Calu3 (cell line): ENCODE measurements at regions of chr18 and their contacts with region 1.

Region 1: DNA sequence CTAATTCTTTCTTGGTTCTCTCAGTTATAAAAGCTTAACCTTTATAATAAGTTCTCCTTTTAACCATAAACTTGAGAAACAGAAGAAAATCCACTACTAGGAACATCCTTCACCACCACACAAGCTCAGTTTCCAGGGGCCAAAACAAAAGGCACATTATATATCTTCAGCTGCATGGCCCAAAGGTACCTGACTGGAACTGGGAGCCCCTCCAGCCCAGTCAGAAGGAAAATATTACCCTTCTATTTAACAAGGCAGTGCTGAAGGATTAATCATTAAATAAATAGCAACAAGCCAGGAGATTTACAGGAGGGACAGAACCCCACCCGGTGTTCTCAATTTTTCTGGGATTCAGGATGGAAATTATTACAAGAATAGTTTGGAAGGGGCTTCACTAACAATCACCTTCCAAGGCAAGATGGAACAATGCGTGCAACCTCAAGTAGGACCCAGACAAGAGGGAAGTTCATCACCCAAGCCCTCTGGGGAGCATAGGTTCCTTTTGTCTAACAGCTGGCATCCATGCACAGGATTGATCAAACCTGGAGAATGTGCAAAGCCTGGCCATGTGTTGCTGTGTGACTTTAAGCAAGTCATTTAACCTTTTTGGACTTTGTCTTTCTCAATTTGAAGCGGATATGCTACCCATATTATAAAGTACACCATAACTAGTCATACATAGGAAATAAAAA is 159.6 kb upstream of the SETBP1 start:
- DNase-seq: peak; percentile 6
- H3K4me3 Mint-ChIP-seq: no peak overlapping the region
- H3K27ac Mint-ChIP-seq: no peak overlapping the region
- H3K4me1 Mint-ChIP-seq: peaks cover 18% of the 10 kb centered on the region
- H3K27me3 Mint-ChIP-seq: no peaks in the 10 kb centered on the region
- CTCF ChIP-seq: no peak

Region 2: GRCh38 chr18:44149706-44150105 is 371.4 kb before region 1 on chr18:
- CTCF ChIA-PET with region 1: no interaction called
- intact Hi-C with region 1: loop called (anchors 10 kb)
- DNase-seq: peak; percentile 31
- H3K4me3 Mint-ChIP-seq: no peak overlapping the region
- H3K27ac Mint-ChIP-seq: peak overlapping the region; percentile 62
- H3K4me1 Mint-ChIP-seq: peaks cover 36% of the 10 kb centered on the region
- H3K27me3 Mint-ChIP-seq: no peaks in the 10 kb centered on the region
- CTCF ChIP-seq: no peak

Region 3: GRCh38 chr18:44374966-44375365 is 146.2 kb before region 1 on chr18:
- CTCF ChIA-PET with region 1: no interaction called
- intact Hi-C with region 1: no loop called
- DNase-seq: no peak
- H3K4me3 Mint-ChIP-seq: no peak overlapping the region
- H3K27ac Mint-ChIP-seq: no peak overlapping the region
- H3K4me1 Mint-ChIP-seq: peaks cover 17% of the 10 kb centered on the region
- H3K27me3 Mint-ChIP-seq: no peaks in the 10 kb centered on the region
- CTCF ChIP-seq: no peak

Region 4: GRCh38 chr18:44901283-44901682 is 380.2 kb after region 1 on chr18:
- CTCF ChIA-PET with region 1: no interaction called
- intact Hi-C with region 1: loop called (anchors 5 kb)
- DNase-seq: peak; percentile 9
- H3K4me3 Mint-ChIP-seq: no peak overlapping the region
- H3K27ac Mint-ChIP-seq: no peak overlapping the region
- H3K4me1 Mint-ChIP-seq: peaks cover 9% of the 10 kb centered on the region
- H3K27me3 Mint-ChIP-seq: no peaks in the 10 kb centered on the region
- CTCF ChIP-seq: no peak